ENCODE measurements at regions of chr2 and their contacts with region 1.

Region 1: GRCh38 chr2:122478771-122479170 is 723.3 kb downstream of the TSN start:
- DNase-seq: no peak
- ATAC-seq: no peak
- H3K4me3 ChIP-seq: no peak overlapping the region
- H3K27ac ChIP-seq: no peak overlapping the region
- H3K4me1 ChIP-seq: no peaks in the 10 kb centered on the region
- H3K27me3 ChIP-seq: no peaks in the 10 kb centered on the region
- CTCF ChIP-seq: no peak

Region 2: GRCh38 chr2:122596598-122596997 is 117.8 kb after region 1 on chr2:
- intact Hi-C with region 1: no loop called
- DNase-seq: no peak
- ATAC-seq: no peak
- H3K4me3 ChIP-seq: no peak overlapping the region
- H3K27ac ChIP-seq: no peak overlapping the region
- H3K4me1 ChIP-seq: no peaks in the 10 kb centered on the region
- H3K27me3 ChIP-seq: no peaks in the 10 kb centered on the region
- CTCF ChIP-seq: no peak

Region 3: DNA sequence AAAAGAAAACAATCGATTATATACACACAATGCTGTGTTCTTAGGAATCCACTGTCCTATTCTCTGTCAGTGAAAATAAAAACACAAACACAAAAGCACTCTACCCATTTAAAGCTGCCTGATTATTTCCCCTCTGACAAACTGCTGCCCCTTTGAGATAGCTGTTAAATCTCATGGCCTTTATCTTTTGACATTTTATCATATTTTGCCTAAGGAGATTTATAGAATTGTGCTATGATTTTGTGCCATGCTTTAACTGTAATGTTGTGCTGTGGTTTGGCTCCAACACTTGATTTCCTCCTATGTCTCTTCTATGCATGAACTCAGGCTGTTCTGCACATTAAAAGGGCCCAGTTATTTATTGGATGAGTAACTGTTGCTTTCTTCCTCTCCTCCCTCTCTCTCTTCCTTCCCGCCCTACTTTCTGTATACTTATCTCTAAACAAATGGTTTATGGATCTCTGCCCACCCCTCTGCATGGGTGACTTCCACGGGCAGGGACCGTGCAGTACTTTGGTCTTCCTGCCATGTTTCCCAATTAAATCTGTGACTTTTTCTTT is 373.3 kb after region 1 on chr2:
- intact Hi-C with region 1: no loop called
- DNase-seq: no peak
- ATAC-seq: no peak
- H3K4me3 ChIP-seq: no peak overlapping the region
- H3K27ac ChIP-seq: no peak overlapping the region
- H3K4me1 ChIP-seq: no peaks in the 10 kb centered on the region
- H3K27me3 ChIP-seq: no peaks in the 10 kb centered on the region
- CTCF ChIP-seq: no peak

Region 4: GRCh38 chr2:123659120-123659519 is 1180.3 kb after region 1 on chr2:
- intact Hi-C with region 1: loop called (anchors 10 kb)
- DNase-seq: no peak
- ATAC-seq: no peak
- H3K4me3 ChIP-seq: no peak overlapping the region
- H3K27ac ChIP-seq: no peak overlapping the region
- H3K4me1 ChIP-seq: no peaks in the 10 kb centered on the region
- H3K27me3 ChIP-seq: no peaks in the 10 kb centered on the region
- CTCF ChIP-seq: no peak